ENCODE measurements at regions of chr14 and their contacts with region 1.

Region 1: GRCh38 chr14:59632381-59632780 is 55.8 kb upstream of the CCDC175 start:
- DNase-seq: peak; percentile 52
- ATAC-seq: no peak
- H3K4me3 Mint-ChIP-seq: no peak overlapping the region
- H3K27ac Mint-ChIP-seq: no peak overlapping the region
- H3K4me1 Mint-ChIP-seq: peaks cover 2% of the 10 kb centered on the region
- H3K27me3 Mint-ChIP-seq: peaks cover 45% of the 10 kb centered on the region

Region 2: DNA sequence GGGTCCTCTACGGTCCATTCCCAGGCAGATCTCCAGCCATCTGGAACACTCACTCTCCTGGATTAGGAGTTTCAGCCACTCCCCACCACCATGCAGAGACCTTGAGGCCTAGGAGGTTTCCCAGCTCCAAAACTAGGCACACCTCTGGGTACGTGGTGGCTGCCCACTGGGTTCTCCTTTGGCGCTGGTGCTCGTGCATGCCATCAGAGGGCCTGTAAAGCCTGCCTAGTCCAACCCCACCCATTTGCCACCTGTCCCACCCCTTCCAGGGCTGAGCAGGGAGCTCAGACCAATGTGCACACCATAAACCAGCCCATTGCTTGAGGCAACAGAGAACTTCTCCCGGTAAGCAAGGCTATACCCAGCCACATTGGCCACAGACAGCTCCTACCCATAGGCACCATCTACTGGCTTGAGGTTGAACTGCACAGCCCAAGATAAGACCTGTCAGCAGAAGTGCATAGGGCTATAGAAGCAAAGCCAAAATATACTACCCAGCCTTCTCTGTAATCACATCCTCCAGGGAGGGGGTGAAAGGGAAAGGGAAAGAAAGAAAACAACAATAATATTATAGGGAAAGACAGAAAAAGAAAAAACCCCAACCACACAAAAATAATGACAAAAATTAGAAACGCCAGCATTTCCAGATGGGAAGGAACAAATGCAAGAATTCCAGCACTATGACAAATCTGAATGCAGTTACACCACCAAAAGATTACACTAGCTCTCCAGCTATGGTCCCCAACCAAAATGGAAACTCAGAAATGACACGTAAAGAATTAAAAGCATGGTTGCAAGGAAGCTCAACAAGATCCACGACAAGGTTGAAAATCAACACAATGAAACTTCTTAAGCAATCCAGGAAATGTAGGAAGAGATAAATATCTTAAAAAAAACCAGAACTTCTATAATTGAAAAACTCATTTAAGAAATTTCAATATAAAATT is 56.1 kb after region 1 on chr14:
- CTCF ChIA-PET with region 1: interaction called, 6 read pairs
- POLR2A ChIA-PET with region 1: no interaction called
- intact Hi-C with region 1: loop called in 1 of 2 experiments (anchors 1 kb)
- DNase-seq: peak; percentile 59
- ATAC-seq: peak; percentile 81
- H3K4me3 Mint-ChIP-seq: no peak overlapping the region
- H3K27ac Mint-ChIP-seq: no peak overlapping the region
- H3K4me1 Mint-ChIP-seq: no peaks in the 10 kb centered on the region
- H3K27me3 Mint-ChIP-seq: peaks cover 12% of the 10 kb centered on the region

Region 3: GRCh38 chr14:59918824-59919569 is 286.6 kb after region 1 on chr14:
- CTCF ChIA-PET with region 1: no interaction called
- POLR2A ChIA-PET with region 1: no interaction called
- intact Hi-C with region 1: loop called (anchors 2 to 5 kb)
- DNase-seq: peak; percentile 35
- ATAC-seq: peak; percentile 30
- H3K4me3 Mint-ChIP-seq: peak overlapping the region; percentile 58
- H3K27ac Mint-ChIP-seq: no peak overlapping the region
- H3K4me1 Mint-ChIP-seq: peaks cover 6% of the 10 kb centered on the region
- H3K27me3 Mint-ChIP-seq: peaks cover 29% of the 10 kb centered on the region